ENCODE measurements at regions of chr22 and their contacts with region 1.

Region 1: GRCh38 chr22:27804470-27805297 is 3.1 kb upstream of the MN1 start:
- ATAC-seq: peak; percentile 7 to 55 (median 44)
- H3K4me3 ChIP-seq: no peak overlapping the region
- H3K27ac ChIP-seq: peak overlapping the region in 1 of 2 donors; percentile 15
- H3K4me1 ChIP-seq: peaks cover 29 to 44% of the 10 kb centered on the region in 2 donors

Region 2: DNA sequence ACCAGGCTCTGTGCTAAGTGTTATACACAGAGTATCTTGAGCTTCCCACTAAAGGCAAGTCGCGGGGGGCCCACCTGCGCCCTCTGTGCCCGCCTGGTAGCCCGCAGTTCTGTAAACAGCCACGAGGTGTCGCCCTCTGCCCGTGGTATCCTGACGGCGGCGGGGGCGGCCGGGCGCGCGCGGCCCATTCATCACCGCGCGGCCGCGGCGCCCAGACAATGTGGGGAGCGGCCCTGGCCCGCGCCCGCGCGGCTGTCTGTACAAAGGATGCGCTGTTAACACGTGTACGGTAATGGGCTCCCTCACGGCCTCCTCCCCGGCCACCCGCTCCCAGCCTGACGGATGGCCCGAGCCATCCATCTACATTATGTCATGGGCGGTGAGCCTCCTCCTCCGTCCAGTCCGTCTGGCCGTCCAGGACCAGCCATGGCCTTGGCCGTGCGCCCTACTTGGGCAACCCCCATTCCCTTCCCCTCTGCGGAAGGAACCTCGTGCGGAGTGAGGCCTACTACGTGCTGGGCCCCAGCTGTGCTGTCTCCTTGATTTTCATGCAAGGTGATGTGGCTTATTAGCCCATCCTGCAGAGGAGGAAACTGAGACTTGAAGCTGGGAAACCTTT is 1047.9 kb before region 1 on chr22:
- in situ Hi-C with region 1: loop called in 2 of 9 experiments (anchors 25 kb)
- ATAC-seq: peak; percentile 95 to 100 (median 99)
- H3K4me3 ChIP-seq: peak overlapping the region in 1 of 5 donors; percentile 15
- H3K27ac ChIP-seq: no peak overlapping the region
- H3K4me1 ChIP-seq: peaks cover under 1 to 1% of the 10 kb centered on the region in 2 donors

Region 3: GRCh38 chr22:27405672-27406388 is 398.9 kb before region 1 on chr22:
- in situ Hi-C with region 1: loop called in 3 of 9 experiments (anchors 25 kb)
- ATAC-seq: peak in 3 of 8 experiments; percentile 43 to 75 (median 64)
- H3K4me3 ChIP-seq: no peak overlapping the region
- H3K27ac ChIP-seq: no peak overlapping the region
- H3K4me1 ChIP-seq: peaks cover 8 to 11% of the 10 kb centered on the region in 2 donors

Region 4: GRCh38 chr22:28094771-28095170 is 290.1 kb after region 1 on chr22:
- in situ Hi-C with region 1: no loop called
- ATAC-seq: no peak
- H3K4me3 ChIP-seq: no peak overlapping the region
- H3K27ac ChIP-seq: no peak overlapping the region
- H3K4me1 ChIP-seq: peaks cover 0 to 19% of the 10 kb centered on the region in 2 donors

Measured in motor neuron (in vitro differentiated cells).